ENCODE measurements at regions of chr12 and their contacts with region 1.

Region 1: GRCh38 chr12:9707864-9708808 is 24.8 kb downstream of the CLECL1 start:
- DNase-seq: peak; percentile 30 to 82 (median 70)
- ATAC-seq: peak; percentile 80 to 88
- H3K4me3 Mint-ChIP-seq: peak overlapping the region; percentile 58 to 82 (median 72)
- H3K27ac Mint-ChIP-seq: peak overlapping the region; percentile 79 to 96 (median 94)
- H3K4me1 Mint-ChIP-seq: peaks cover 26 to 86% (median 70%) of the 10 kb centered on the region in 4 donors
- H3K27me3 Mint-ChIP-seq: no peaks in the 10 kb centered on the region

Region 2: GRCh38 chr12:9597365-9597764 is 110.8 kb before region 1 on chr12:
- POLR2A ChIA-PET with region 1: no interaction called
- DNase-seq: no peak
- ATAC-seq: no peak
- H3K4me3 Mint-ChIP-seq: no peak overlapping the region
- H3K27ac Mint-ChIP-seq: no peak overlapping the region
- H3K4me1 Mint-ChIP-seq: peaks cover 0 to 6% (median 0%) of the 10 kb centered on the region in 4 donors
- H3K27me3 Mint-ChIP-seq: no peaks in the 10 kb centered on the region

Region 3: DNA sequence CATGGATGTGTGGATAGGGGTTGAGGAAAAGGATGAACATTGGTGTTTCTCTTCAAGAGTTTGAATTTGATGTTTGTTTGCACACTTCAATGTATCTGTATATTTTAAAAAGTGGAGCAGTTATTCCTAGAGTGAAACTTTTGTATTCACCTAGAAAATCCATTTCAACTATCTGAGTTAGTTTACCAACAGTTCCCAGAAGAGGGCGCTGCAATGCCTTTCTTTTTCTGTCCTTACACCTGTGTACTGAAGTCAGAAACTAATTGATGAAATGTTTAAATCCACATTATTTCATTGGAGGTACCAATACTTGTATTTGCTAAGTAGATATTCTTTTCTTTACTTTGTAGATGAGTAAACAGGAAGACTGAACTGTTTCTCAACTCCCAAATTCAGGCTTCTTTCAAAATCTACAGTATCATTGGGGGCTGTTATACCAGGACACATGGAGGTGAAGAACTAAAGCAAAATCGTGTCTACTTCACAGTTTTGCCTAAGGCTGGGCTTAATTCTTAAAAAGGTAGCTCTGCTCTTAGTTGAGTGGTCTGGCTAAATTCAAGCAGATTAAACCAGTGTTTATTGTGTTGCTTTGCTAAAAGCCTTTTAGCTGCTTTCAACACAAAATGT is 73.8 kb before region 1 on chr12:
- POLR2A ChIA-PET with region 1: interaction called, 17 read pairs
- DNase-seq: peak; percentile 58 to 90 (median 78)
- ATAC-seq: peak; percentile 86 to 92
- H3K4me3 Mint-ChIP-seq: peak overlapping the region; percentile 45 to 82 (median 72)
- H3K27ac Mint-ChIP-seq: peak overlapping the region; percentile 82 to 99 (median 92)
- H3K4me1 Mint-ChIP-seq: peaks cover 27 to 78% (median 63%) of the 10 kb centered on the region in 4 donors
- H3K27me3 Mint-ChIP-seq: no peaks in the 10 kb centered on the region

Region 4: GRCh38 chr12:9741726-9742125 is 33.6 kb after region 1 on chr12:
- POLR2A ChIA-PET with region 1: interaction called, 26 read pairs
- DNase-seq: peak; percentile 30 to 94 (median 82)
- ATAC-seq: peak; percentile 76 to 80
- H3K4me3 Mint-ChIP-seq: peak overlapping the region; percentile 24 to 88 (median 76)
- H3K27ac Mint-ChIP-seq: peak overlapping the region; percentile 79 to 100 (median 98)
- H3K4me1 Mint-ChIP-seq: peaks cover 27 to 66% (median 63%) of the 10 kb centered on the region in 4 donors
- H3K27me3 Mint-ChIP-seq: no peaks in the 10 kb centered on the region

Region 5: DNA sequence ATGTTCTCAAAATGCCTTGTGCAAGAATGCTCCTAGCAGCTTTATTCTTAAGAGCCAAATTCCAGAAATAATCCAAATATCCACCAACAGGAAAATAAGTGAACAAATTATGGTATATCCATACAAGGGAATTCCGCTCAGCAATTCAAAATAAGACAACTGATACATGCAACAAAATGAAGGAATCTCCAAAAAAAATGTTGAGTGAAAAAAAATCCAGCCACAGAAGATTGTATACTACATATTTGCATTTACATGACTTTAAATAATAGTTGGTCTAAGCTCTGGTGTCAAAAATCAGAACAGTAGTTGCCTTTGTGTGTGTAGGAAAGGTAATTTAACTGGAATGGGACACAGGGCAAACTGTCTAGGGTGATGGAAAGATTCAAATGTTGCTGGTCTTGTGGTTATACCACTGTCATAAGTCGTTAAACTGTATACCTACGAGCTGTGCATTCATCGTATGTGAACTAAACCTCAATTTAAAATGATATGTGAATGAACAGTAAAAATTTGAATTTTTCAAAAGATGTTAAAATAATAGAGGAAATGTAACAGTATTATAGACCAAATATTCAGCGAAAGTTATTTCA is 49.4 kb after region 1 on chr12:
- POLR2A ChIA-PET with region 1: no interaction called
- DNase-seq: no peak
- ATAC-seq: no peak
- H3K4me3 Mint-ChIP-seq: peak overlapping the region; percentile 87 to 99 (median 96)
- H3K27ac Mint-ChIP-seq: peak overlapping the region; percentile 96 to 100 (median 98)
- H3K4me1 Mint-ChIP-seq: peaks cover 28 to 81% (median 62%) of the 10 kb centered on the region in 4 donors
- H3K27me3 Mint-ChIP-seq: no peaks in the 10 kb centered on the region

Region 6: DNA sequence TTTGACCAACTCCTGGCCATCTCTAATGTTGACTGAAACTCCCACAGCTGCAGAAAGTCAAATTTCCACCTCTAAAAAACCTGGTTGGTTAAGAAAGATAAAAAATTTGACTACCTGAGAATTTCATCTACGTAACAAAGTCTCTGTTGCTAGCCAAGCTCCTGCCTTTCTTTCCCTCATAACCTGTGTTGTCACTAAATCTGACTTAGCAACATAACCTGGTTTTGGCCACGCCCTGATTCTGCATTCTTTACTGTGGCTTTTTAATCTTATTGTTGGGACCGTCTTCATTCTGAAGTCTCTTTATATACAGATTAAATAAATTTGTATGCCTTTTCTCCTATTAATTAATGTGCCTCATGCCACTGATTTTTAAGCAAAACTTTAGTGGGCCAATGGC is 68.6 kb after region 1 on chr12:
- POLR2A ChIA-PET with region 1: no interaction called
- DNase-seq: no peak
- ATAC-seq: peak in 1 of 2 donors; percentile 29
- H3K4me3 Mint-ChIP-seq: peak overlapping the region in 1 of 10 donors; percentile 6
- H3K27ac Mint-ChIP-seq: peak overlapping the region in 5 of 10 donors; percentile 17 to 66 (median 42)
- H3K4me1 Mint-ChIP-seq: peaks cover 32 to 89% (median 72%) of the 10 kb centered on the region in 4 donors
- H3K27me3 Mint-ChIP-seq: no peaks in the 10 kb centered on the region

Measured in naive thymus-derived CD8-positive, alpha-beta T cell (primary cell).